CD4-positive, alpha-beta memory T cell (primary cell): ENCODE measurements at regions of chr2 and their contacts with region 1.

Region 1: GRCh38 chr2:20326163-20326780 is 24.4 kb downstream of the PUM2 start:
- DNase-seq: peak; percentile 34 to 55 (median 41)
- H3K4me3 ChIP-seq: no peak overlapping the region
- H3K4me3 Mint-ChIP-seq: peak overlapping the region in 2 of 8 donors; percentile 31 to 51
- H3K27ac ChIP-seq: no peak overlapping the region
- H3K27ac Mint-ChIP-seq: peak overlapping the region; percentile 45 to 75 (median 52)
- H3K4me1 ChIP-seq: peaks cover 52% of the 10 kb centered on the region
- H3K4me1 Mint-ChIP-seq: peaks cover 42 to 76% (median 65%) of the 10 kb centered on the region in 4 donors
- H3K27me3 ChIP-seq: no peaks in the 10 kb centered on the region
- H3K27me3 Mint-ChIP-seq: no peaks in the 10 kb centered on the region

Region 2: GRCh38 chr2:20254731-20255130 is 71.5 kb before region 1 on chr2:
- CTCF ChIA-PET with region 1: no interaction called
- POLR2A ChIA-PET with region 1: no interaction called
- intact Hi-C with region 1: loop called (anchors 5 kb)
- DNase-seq: no peak
- H3K4me3 ChIP-seq: no peak overlapping the region
- H3K4me3 Mint-ChIP-seq: no peak overlapping the region
- H3K27ac ChIP-seq: no peak overlapping the region
- H3K27ac Mint-ChIP-seq: no peak overlapping the region
- H3K4me1 ChIP-seq: no peaks in the 10 kb centered on the region
- H3K4me1 Mint-ChIP-seq: peaks cover 0 to 2% (median 0%) of the 10 kb centered on the region in 4 donors
- H3K27me3 ChIP-seq: no peaks in the 10 kb centered on the region
- H3K27me3 Mint-ChIP-seq: no peaks in the 10 kb centered on the region

Region 3: DNA sequence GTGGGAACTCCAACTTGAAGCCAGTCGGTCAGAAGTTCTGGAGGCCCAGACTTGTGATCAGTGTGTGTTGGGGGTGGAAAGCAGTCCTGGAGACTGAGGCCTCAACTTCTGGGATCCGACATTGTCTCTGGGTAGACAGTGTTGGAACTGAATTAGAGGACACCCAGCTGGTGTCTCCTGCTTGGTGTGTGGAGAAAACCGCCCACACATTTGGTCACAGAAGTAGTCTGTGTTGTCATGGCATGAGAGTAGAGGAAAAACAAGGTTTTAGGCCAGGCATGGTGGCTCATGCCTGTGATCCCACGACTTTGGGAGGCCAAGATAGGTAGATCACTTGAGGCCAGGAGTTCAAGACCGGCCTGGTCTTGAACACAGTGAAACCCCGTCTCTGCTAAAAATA is 27.2 kb before region 1 on chr2:
- CTCF ChIA-PET with region 1: interaction called, 17 read pairs
- POLR2A ChIA-PET with region 1: no interaction called
- intact Hi-C with region 1: no loop called
- DNase-seq: no peak
- H3K4me3 ChIP-seq: no peak overlapping the region
- H3K4me3 Mint-ChIP-seq: no peak overlapping the region
- H3K27ac ChIP-seq: no peak overlapping the region
- H3K27ac Mint-ChIP-seq: peak overlapping the region in 4 of 7 donors; percentile 15 to 89 (median 67)
- H3K4me1 ChIP-seq: no peaks in the 10 kb centered on the region
- H3K4me1 Mint-ChIP-seq: peaks cover 12 to 28% (median 17%) of the 10 kb centered on the region in 4 donors
- H3K27me3 ChIP-seq: no peaks in the 10 kb centered on the region
- H3K27me3 Mint-ChIP-seq: no peaks in the 10 kb centered on the region

Region 4: DNA sequence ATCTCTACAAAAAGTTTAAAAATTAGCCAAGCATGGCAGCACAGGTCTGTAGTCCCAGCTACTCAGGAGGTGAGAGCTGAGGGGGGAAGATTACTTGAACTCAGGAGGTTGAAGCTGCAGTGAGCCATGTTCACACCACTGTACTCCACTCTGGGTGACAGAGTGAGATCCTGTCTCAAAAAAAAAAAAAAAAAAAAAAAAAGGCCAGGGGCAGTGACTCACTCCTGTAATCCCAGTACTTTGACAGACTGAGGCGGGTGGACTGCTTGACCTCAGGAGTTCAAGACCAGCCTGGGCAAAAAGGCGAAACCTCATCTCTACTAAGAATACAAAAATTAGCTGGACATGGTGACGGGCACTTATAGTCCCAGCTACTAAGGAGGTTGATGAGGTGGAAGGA is 12.6 kb before region 1 on chr2:
- CTCF ChIA-PET with region 1: interaction called, 31 read pairs
- POLR2A ChIA-PET with region 1: interaction called, 4 read pairs
- intact Hi-C with region 1: no loop called
- DNase-seq: no peak
- H3K4me3 ChIP-seq: no peak overlapping the region
- H3K4me3 Mint-ChIP-seq: no peak overlapping the region
- H3K27ac ChIP-seq: no peak overlapping the region
- H3K27ac Mint-ChIP-seq: no peak overlapping the region
- H3K4me1 ChIP-seq: peaks cover 20% of the 10 kb centered on the region
- H3K4me1 Mint-ChIP-seq: peaks cover 16 to 47% (median 30%) of the 10 kb centered on the region in 4 donors
- H3K27me3 ChIP-seq: no peaks in the 10 kb centered on the region
- H3K27me3 Mint-ChIP-seq: no peaks in the 10 kb centered on the region

Region 5: DNA sequence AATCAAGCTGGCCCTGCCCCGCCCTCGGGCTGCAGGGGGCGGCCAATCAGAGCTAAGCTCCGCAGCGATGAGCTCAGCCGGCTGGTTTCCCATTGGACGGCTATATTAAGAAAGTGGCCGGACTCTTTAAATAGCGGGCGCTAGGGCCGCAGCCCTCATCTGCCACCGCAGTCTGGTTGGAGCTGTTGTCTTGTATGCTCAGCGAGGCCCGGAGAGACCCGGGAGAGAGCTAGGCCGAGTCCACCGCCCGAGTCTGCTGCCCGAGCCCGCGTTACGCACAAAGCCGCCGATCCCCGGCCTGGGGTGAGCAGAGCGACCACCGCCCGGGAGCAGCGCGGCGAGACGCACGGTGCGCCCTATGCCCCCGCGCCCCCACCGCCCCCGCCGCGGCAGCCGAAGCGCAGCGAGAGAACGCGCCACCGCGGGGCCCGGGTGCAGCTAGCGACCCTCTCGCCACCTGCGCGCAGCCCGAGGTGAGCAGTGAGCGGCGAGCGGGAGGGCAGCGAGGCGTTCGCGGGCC is 120.7 kb after region 1 on chr2 and contains the start of gene RHOB:
- CTCF ChIA-PET with region 1: interaction called, 3 read pairs
- POLR2A ChIA-PET with region 1: no interaction called
- intact Hi-C with region 1: loop called (anchors 10 kb)
- DNase-seq: peak; percentile 79 to 88 (median 82)
- H3K4me3 ChIP-seq: peak within 1 kb of the TSS; percentile 47 to 76
- H3K4me3 Mint-ChIP-seq: peak within 1 kb of the TSS; percentile 78 to 86 (median 82)
- H3K27ac ChIP-seq: peak within 1 kb of the TSS; percentile 47
- H3K27ac Mint-ChIP-seq: peak within 1 kb of the TSS in 5 of 7 donors; percentile 61 to 90 (median 75)
- H3K4me1 ChIP-seq: peaks cover 11% of the 10 kb centered on the region
- H3K4me1 Mint-ChIP-seq: peaks cover 0 to 9% (median 3%) of the 10 kb centered on the region in 4 donors
- H3K27me3 ChIP-seq: peaks cover 10% of the 10 kb centered on the region
- H3K27me3 Mint-ChIP-seq: peaks cover 8 to 13% of the 10 kb centered on the region in 2 donors
- total RNA-seq, gene RHOB: 7.9 to 8.9 TPM